ENCODE measurements at regions of chr3 and their contacts with region 1.

Region 1: GRCh38 chr3:49217688-49218470 is 46.5 kb downstream of the KLHDC8B start:
- DNase-seq: peak; percentile 14 to 33
- ATAC-seq: peak; percentile 67 to 91 (median 80)
- H3K4me3 ChIP-seq: no peak overlapping the region
- H3K27ac ChIP-seq: peak overlapping the region; percentile 56 to 89 (median 83)
- H3K4me1 ChIP-seq: peaks cover 6 to 24% (median 18%) of the 10 kb centered on the region in 9 donors
- H3K27me3 ChIP-seq: no peaks in the 10 kb centered on the region
- CTCF ChIP-seq: no peak

Region 2: DNA sequence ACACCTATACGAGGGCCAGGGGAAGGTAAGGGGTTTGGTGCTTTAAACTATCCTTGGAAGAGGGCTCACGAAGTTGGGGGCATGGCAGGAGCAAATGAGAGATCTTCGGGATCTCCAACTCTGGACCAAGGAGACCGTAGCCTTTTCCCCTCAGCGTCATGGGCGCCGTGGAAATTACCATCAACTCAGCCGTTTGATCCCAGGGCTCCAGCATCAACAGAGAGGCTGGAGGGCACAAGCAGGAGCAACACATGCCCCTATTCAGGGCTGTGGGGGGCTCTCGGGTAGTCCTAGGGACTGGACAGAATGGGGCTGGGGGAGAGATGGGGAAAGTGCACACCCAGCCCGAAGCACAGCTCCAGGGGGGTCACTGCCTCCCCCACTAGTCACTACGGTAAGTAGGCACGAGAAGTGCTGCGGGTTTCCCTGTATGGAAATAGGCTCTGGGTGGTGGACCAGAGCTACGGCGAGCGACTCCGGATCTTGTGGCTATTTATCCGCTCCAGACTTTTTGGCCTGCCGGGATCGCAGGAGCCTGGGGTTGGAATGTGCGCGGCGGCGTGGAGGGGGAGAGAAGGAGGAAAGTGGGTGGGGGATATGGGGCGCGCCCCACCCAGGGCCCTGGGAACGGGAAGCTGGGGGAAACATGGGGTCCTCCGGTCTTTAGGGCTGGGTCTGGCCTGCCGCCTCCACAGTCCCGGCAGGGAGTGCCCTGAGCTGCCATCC is 84.5 kb before region 1 on chr3:
- intact Hi-C with region 1: loop called in 1 of 10 experiments (anchors 5 kb)
- DNase-seq: peak; percentile 88 to 93
- ATAC-seq: peak; percentile 79 to 93 (median 86)
- H3K4me3 ChIP-seq: peak overlapping the region; percentile 61 to 97 (median 78)
- H3K27ac ChIP-seq: peak overlapping the region; percentile 85 to 99 (median 94)
- H3K4me1 ChIP-seq: peaks cover 15 to 46% (median 35%) of the 10 kb centered on the region in 9 donors
- H3K27me3 ChIP-seq: no peaks in the 10 kb centered on the region
- CTCF ChIP-seq: peak in 1 of 9 donors; percentile 0

Region 3: DNA sequence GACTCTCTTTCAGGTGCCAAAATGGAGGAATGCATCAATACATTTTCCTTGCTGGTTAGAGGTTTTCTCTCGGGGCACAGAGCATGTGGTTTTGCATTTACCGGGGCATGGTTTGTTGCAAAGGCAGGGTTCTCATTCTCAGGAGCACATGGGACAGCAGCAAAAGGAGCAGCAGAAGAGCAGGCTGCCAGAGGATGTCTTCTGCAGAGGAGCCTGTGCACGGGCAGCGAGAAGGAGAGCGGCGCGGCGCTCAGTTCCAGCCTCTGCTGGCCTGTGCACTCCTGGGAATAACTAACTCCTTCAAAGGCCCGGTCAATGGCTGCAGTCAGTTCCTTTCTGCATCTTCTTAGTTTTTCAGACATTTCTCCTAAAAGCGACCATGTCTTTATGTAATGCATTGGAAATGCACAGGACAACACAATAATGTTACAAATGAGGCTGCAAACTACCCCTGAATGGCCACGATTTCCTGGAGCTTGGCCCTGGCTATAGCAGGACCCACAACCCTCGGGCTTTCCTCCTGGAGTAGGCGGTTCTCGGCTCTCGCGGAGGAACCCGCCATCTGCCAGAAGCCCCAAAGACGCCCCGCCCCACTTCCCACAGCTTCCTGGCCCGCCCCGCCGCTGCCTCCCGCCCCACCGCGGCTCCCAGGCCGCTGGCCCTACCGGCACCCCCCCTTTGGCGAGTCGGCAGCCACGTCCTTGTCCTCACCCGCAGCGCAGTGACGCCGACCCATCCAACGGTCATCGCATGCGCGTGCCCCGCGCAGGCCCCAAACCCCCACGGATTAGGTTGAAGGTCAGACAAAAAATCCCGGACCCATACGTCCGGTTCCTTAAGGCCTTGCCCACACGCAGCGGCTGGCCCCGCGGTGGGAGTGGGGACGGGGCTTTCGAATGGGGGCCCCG is 58.9 kb after region 1 on chr3 and contains the start of gene C3orf62:
- intact Hi-C with region 1: loop called in 1 of 10 experiments (anchors 5 kb)
- DNase-seq: peak; percentile 95 to 96
- ATAC-seq: peak; percentile 95 to 96 (median 96)
- H3K4me3 ChIP-seq: peak within 1 kb of the TSS; percentile 9 to 61 (median 56)
- H3K27ac ChIP-seq: peak within 1 kb of the TSS; percentile 91 to 99 (median 98)
- H3K4me1 ChIP-seq: peaks cover 16 to 46% (median 40%) of the 10 kb centered on the region in 9 donors
- H3K27me3 ChIP-seq: no peaks in the 10 kb centered on the region
- CTCF ChIP-seq: peak in 1 of 9 donors; percentile 8
- total RNA-seq, gene C3orf62: 2.3 to 4.1 (median 2.8) TPM

Region 4: GRCh38 chr3:49570028-49570654 is 352.3 kb after region 1 on chr3:
- intact Hi-C with region 1: no loop called
- DNase-seq: no peak
- ATAC-seq: no peak
- H3K4me3 ChIP-seq: no peak overlapping the region
- H3K27ac ChIP-seq: no peak overlapping the region
- H3K4me1 ChIP-seq: no peaks in the 10 kb centered on the region
- H3K27me3 ChIP-seq: no peaks in the 10 kb centered on the region
- CTCF ChIP-seq: no peak